Posterior cingulate gyrus (tissue), 11 donors: ENCODE measurements at regions of chr2 and their contacts with region 1.

Region 1: GRCh38 chr2:155223781-155224406 is 525.4 kb downstream of the KCNJ3 start:
- DNase-seq: no peak

Region 2: DNA sequence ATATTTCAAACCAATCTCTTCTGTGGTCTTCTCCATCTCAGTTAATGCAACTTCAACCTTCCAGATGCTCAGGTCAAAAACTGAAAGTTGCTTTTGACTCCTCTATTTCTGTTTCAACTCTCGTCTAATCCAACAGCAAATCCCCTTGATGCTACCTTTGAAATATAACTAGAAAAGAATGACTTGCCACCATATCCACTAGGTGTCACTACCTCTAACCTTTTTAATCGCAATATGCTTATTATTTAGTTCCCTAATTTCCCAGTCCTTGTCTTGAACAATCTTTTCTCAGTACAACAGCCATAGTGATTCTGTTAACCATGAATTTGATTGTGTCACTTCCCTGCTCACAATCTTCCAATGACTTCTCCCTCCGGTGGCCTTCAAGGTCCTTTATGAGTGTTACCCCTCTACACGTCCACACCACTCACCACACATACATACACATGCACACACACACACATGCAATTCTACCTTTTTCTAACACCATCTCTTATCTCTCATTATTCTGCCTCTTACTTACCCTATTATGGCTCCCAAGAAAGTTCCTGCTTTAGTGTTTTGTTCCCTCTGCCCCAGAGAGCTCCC is 770.9 kb before region 1 on chr2:
- intact Hi-C with region 1: loop called (anchors 5 kb)
- DNase-seq: no peak

Region 3: GRCh38 chr2:154623819-154624218 is 600.1 kb before region 1 on chr2:
- intact Hi-C with region 1: loop called (anchors 1 kb)
- DNase-seq: peak in 7 of 10 donors; percentile 39 to 88 (median 55)

Region 4: GRCh38 chr2:155043677-155044076 is 180.2 kb before region 1 on chr2:
- intact Hi-C with region 1: no loop called
- DNase-seq: no peak